Breast epithelium (tissue), 4 donors: ENCODE measurements at regions of chr4 and their contacts with region 1.

Region 1: GRCh38 chr4:124028182-124028581 is 631.6 kb downstream of the SPRY1 start:
- DNase-seq: no peak
- H3K4me3 ChIP-seq: no peak overlapping the region
- H3K27ac ChIP-seq: peak overlapping the region in 1 of 2 donors; percentile 21
- H3K4me1 ChIP-seq: no peaks in the 10 kb centered on the region
- H3K27me3 ChIP-seq: no peaks in the 10 kb centered on the region
- CTCF ChIP-seq: no peak
- POLR2A ChIP-seq: no peak

Region 2: DNA sequence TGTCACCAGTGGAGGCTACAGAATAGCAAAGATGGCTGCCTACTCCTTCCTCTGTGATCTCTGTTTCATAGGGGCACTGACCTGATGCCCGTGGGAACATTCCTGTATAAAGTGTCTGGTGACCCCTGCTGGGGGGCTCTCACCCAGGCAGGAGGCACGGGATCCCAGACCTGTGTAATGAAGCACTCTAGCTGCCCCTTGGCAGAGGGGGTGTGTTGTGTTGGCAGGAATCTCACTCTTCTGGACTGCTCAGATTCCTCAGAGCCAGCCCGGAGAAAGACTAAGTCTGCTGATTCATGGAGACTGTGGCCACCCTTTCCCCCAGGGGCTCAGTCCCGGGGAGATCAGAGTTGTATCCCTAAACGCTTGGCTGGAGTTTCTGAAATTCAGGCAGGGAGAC is 16.7 kb after region 1 on chr4:
- intact Hi-C with region 1: loop called (anchors 1 kb)
- DNase-seq: no peak
- H3K4me3 ChIP-seq: no peak overlapping the region
- H3K27ac ChIP-seq: no peak overlapping the region
- H3K4me1 ChIP-seq: no peaks in the 10 kb centered on the region
- H3K27me3 ChIP-seq: no peaks in the 10 kb centered on the region
- CTCF ChIP-seq: no peak
- POLR2A ChIP-seq: no peak

Region 3: DNA sequence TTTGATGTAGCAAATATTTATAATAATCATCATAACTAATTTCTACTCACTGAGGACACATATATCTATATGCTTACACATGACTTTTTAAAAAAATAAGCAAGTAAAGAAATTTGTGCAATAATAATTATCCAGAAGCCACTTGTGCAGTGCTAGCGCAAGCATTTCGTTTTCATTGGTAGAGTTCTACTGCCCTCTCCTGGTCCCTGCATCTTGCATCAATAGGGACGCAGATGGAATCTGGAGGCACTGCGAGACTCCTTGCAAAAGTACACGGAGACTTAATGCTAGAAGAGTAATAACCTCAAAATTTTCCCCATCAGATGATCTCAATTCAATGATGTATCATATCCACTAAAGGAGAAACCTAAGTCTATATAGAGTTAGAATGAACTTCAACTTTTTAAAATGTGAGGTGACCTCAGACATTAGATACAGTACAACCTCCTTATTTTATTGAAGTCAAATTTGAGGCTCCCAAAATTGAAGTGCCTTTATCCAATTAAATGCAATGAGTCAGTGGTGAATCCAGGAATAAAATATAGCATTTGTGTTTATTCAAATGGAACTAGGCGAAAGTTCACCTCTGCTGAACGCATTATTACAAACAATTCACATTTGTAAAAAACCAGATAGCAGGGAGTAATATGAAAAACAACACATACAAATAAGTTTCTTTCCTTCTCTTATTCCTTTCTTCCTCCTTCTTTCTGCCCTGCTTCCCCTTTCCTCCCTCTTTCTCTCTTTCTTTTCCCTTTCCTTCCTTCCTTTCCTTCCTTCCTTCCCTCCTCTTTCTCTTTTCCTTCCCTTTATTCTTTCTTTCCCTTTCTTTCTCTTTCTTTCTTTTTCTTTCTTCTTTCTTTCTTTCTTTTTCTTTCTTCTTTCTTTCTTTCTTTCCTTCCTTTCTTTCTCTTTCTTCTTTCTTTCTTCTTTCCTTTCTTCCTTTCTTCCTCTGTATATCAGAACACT is 234.3 kb after region 1 on chr4:
- intact Hi-C with region 1: no loop called
- DNase-seq: peak; percentile 50 to 53
- H3K4me3 ChIP-seq: no peak overlapping the region
- H3K27ac ChIP-seq: peak overlapping the region in 1 of 2 donors; percentile 33
- H3K4me1 ChIP-seq: no peaks in the 10 kb centered on the region
- H3K27me3 ChIP-seq: no peaks in the 10 kb centered on the region
- CTCF ChIP-seq: peak; percentile 45 to 86 (median 74)
- POLR2A ChIP-seq: no peak